Heart left ventricle (tissue), 16 donors: ENCODE measurements at regions of chr4 and their contacts with region 1.

Region 1: DNA sequence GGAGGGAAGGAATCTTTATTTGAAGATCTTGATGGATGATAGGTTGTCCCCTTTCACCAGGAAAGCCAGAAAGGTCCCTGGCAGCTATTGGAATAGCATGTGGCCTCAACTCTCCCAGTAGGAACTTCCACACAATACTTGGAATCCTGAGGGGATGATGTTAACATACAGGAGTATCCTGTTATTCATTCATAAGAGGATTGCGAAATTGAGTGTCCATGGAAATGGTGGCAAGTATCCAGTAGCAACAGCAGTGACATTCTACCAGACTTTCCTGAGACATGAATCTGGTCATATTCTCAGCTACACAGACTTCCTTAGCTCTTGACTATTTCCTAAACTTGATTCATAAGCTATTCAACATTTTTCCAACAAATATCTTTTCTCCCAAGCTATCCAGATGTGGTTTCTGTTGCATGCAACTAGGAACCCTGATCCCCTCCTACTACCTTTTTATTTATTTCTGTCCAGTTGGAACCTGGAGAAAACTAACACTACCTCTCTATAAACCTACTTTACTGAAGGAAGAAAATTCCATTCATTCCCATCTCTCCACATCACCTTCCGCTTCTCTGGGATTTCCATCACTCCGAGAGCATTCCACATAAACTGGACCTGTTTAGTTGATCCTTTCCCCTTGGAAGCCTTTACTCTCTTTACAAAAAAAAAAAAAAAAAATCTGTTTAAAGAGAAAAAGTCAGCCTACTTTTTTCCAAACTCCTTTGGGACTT is 101.8 kb downstream of the ANXA5 start:
- DNase-seq: peak in 3 of 5 donors; percentile 28 to 53 (median 38)
- ATAC-seq: peak; percentile 88 to 96 (median 95)
- H3K4me3 ChIP-seq: no peak overlapping the region
- H3K27ac ChIP-seq: peak overlapping the region; percentile 44 to 82 (median 68)
- H3K4me1 ChIP-seq: peaks cover 0 to 19% (median 2%) of the 10 kb centered on the region in 12 donors
- H3K27me3 ChIP-seq: no peaks in the 10 kb centered on the region
- CTCF ChIP-seq: no peak
- POLR2A ChIP-seq: no peak

Region 2: GRCh38 chr4:120960656-120961267 is 634.2 kb before region 1 on chr4:
- intact Hi-C with region 1: no loop called
- DNase-seq: no peak
- ATAC-seq: no peak
- H3K4me3 ChIP-seq: no peak overlapping the region
- H3K27ac ChIP-seq: no peak overlapping the region
- H3K4me1 ChIP-seq: no peaks in the 10 kb centered on the region
- H3K27me3 ChIP-seq: no peaks in the 10 kb centered on the region
- CTCF ChIP-seq: no peak
- POLR2A ChIP-seq: no peak

Region 3: GRCh38 chr4:121148000-121148399 is 447.0 kb before region 1 on chr4:
- intact Hi-C with region 1: no loop called
- DNase-seq: no peak
- ATAC-seq: no peak
- H3K4me3 ChIP-seq: no peak overlapping the region
- H3K27ac ChIP-seq: no peak overlapping the region
- H3K4me1 ChIP-seq: no peaks in the 10 kb centered on the region
- H3K27me3 ChIP-seq: peaks cover 0 to 4% (median 0%) of the 10 kb centered on the region in 9 donors
- CTCF ChIP-seq: no peak
- POLR2A ChIP-seq: no peak

Region 4: DNA sequence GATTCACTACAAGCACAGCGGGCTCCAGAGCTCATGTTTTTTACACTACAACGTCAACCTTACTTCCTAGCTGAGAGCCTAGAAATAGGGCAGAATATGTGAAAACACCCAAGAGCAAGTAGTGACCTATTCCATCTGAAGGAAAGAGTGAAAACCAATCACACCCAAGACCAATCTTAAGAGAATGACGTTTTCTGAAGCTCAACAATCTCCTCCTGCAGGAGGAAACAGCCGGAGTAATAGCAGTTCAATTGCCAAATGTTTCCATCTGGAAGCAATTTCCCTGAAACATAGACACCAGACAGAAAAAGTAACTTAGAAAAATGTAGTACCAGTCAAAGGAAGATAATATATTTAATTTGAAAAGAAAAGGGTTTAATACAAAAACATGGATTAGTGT is 40.6 kb before region 1 on chr4:
- intact Hi-C with region 1: loop called in 1 of 10 experiments (anchors 5 kb)
- DNase-seq: no peak
- ATAC-seq: peak; percentile 63 to 86 (median 82)
- H3K4me3 ChIP-seq: no peak overlapping the region
- H3K27ac ChIP-seq: peak overlapping the region in 9 of 12 donors; percentile 23 to 77 (median 63)
- H3K4me1 ChIP-seq: peaks cover 0 to 34% (median 6%) of the 10 kb centered on the region in 12 donors
- H3K27me3 ChIP-seq: no peaks in the 10 kb centered on the region
- CTCF ChIP-seq: no peak
- POLR2A ChIP-seq: no peak